Right cardiac atrium (tissue), 5 donors: ENCODE measurements at regions of chr2 and their contacts with region 1.

Region 1: DNA sequence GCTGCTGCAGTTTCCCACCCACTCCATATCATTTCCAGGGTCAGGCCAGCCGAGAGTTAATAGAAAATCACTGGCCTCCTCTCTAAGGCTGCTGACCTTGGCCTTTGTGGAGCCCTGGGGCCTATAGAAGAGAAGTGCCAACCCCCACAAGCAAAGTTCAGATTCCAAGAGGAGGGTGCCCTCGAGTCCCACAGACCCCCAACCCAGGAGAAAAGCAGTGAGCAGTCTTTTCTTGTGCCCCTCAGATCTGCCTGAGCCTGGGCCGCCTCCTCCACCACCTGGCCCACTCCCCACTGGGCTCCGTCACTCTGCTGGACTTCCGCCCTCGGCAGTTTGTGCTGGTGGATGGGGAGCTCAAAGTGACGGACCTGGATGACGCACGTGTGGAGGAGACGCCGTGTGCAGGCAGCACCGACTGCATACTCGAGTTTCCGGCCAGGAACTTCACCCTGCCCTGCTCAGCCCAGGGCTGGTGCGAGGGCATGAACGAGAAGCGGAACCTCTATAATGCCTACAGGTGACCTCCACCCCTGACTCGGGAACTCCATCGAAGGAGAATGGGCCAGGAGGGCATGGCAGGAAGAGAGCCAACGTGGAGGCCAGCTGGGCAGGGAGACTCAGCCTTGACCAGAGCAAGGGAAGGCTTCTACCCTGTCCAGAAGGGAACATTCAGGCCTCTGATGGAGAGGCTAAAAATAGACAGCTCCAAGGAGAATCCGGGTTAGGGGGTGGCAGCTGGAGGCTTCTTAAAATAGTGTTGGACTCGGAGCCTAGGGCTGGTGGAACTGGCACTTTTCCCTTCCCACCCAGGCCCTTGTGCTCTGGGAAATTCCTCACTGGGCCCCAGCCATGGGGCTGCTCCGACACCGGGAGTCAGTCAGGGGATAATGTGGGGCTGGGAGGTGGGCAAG is 6.2 kb downstream of the PKDCC start:
- DNase-seq: peak; percentile 64 to 83 (median 79)
- ATAC-seq: peak; percentile 63 to 68
- H3K4me3 ChIP-seq: no peak overlapping the region
- H3K27ac ChIP-seq: peak overlapping the region; percentile 78
- H3K4me1 ChIP-seq: peaks cover 31% of the 10 kb centered on the region
- H3K27me3 ChIP-seq: no peaks in the 10 kb centered on the region

Region 2: DNA sequence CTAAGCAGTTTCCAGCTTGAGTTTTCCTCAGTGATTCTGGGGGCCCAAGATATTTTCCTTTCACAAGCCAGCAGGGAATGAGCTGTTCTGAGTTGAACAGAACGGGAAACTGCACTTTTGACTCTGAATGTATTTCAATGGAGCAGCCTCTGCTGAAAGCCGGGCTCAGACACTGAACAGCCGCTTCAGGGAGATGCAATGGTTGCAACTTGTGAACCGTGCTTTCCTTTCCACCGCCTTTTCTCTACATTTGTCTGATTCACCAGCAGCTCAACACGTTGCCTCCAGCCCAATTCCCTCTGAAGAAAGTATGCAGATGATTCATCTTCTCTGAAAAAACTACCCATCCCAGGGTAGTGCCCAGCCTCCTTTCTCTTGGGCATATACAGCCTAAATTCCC is 125.5 kb before region 1 on chr2:
- intact Hi-C with region 1: loop called in 3 of 4 experiments (anchors 5 to 10 kb)
- DNase-seq: no peak
- ATAC-seq: no peak
- H3K4me3 ChIP-seq: no peak overlapping the region
- H3K27ac ChIP-seq: no peak overlapping the region
- H3K4me1 ChIP-seq: peaks cover 35% of the 10 kb centered on the region
- H3K27me3 ChIP-seq: no peaks in the 10 kb centered on the region

Region 3: DNA sequence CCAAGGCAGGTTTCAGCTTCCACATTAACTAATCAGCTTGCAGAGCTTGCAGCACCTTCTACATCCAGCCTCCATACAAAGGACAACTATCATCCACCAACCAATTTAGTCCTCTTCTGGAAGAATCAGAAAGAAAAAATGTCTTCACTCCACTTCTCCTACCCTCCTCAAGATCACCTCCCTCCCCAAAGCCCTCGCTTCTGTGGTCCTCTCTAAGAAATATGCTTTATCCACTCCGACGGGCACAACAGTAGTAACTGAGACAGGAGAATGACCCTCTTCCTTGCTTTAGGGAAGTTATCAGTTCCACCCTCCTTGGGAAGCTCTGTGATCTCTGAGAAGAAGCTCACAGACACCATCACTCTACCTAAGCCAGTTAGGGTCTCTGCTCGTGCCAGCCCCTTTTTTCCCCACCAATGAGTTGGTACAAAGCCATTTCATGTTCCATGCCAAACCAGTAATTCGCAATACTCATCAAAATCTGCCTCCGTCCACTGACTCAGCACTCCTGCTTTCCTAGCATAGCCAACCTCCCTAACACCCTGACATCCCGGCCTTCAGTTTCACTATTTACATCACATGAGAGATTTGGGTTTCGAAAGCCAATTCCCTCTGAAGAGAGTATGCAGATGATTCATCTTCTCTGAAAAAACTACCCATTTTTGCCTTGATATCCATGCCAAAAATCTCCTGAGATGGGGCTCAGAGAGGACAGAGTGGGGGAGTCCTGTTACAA is 120.3 kb before region 1 on chr2:
- intact Hi-C with region 1: loop called in 3 of 4 experiments (anchors 5 to 10 kb)
- DNase-seq: no peak
- ATAC-seq: peak; percentile 42 to 45
- H3K4me3 ChIP-seq: no peak overlapping the region
- H3K27ac ChIP-seq: peak overlapping the region; percentile 93
- H3K4me1 ChIP-seq: peaks cover 18% of the 10 kb centered on the region
- H3K27me3 ChIP-seq: no peaks in the 10 kb centered on the region

Region 4: DNA sequence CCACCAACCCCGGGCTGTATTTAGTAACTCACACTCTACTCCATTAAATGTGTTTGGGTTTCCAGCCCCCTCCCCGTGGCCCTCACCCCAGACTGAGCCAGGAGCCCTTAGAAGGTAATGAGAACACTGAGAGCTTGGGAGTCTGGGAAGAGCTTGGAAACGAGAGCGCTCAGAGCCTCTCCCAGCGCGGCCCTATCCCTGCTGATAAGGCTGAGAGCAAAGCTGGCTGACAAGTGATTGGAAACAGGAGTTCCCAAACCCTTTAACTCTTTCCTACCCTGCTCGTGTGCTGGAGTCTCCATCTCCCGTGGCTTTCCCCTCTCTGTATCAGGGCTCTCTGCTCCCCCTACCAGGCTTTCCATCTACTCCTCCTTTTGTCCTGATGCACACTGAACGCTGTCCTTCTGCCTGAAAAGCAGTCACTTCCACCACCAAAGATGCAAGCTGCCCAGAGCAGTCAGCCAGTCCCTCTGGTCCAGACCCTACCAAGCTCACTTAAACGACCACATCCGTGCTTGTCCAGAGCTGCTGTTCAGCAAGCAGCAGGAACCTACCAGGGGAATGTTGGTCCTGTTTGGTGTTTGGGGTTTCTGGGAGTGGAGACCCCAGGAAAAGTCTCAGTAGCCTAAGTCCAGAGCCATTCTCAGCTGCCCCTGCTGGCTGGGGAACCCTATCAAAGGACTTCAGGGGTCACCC is 106.2 kb before region 1 on chr2:
- intact Hi-C with region 1: loop called in 1 of 4 experiments (anchors 10 kb)
- DNase-seq: peak; percentile 64 to 88 (median 85)
- ATAC-seq: peak; percentile 93 to 96
- H3K4me3 ChIP-seq: no peak overlapping the region
- H3K27ac ChIP-seq: peak overlapping the region; percentile 3
- H3K4me1 ChIP-seq: peaks cover 5% of the 10 kb centered on the region
- H3K27me3 ChIP-seq: no peaks in the 10 kb centered on the region